ENCODE measurements at regions of chr19 and their contacts with region 1.

Region 1: DNA sequence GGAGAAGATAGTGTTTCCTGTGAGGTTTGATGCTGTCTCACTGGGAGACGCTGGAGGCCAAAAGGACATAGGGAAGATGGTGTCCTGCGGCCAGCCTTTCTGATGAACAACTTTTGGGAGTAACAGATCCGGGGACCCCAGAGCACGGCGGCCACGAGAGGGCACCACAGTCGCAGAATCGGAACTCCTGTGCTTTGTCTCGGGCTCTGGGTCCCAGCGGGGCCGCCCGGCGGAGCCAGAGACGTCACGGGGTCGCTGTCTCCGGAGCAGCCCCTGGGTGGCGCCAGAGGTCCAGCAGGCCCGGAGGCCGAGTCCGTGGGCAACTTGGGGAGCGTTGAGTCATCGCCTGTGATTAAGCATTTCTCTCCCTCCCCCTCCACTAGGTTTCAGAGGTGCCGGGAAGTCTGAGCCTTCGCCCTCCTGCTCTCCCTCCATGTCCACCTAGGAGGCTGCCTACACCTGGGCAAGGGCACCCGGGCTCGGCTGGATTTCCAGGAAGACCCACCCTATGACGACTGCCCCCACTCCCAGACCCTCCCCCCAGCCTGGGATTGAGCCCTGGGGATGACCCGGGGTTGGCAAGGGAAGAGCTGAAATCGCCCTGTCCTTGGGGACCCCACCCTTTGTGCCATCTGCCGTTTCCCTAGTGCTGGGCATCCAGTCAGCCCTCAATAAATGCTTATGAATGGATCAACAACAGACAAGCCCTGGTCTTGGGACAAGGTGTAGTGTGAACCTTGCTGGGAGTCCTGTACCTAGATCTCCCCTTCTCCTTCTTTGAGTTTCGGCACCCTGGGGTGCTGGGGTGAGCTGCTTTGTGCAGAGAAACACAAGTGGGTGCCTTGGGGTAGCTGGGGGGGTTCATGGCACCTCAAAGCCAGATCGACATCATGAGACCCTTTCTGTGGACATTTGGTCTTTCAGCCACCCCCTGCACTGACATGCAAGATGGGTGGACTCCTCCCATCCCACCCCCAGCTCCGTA is 3.4 kb downstream of the NANOS3 start:
- DNase-seq: peak; percentile 84
- ATAC-seq: peak; percentile 95
- H3K4me3 ChIP-seq: peak overlapping the region; percentile 42
- H3K27ac ChIP-seq: peak overlapping the region; percentile 70
- H3K4me1 ChIP-seq: peaks cover 25% of the 10 kb centered on the region
- H3K27me3 ChIP-seq: no peaks in the 10 kb centered on the region
- CTCF ChIP-seq: peak; percentile 100; a peak in 5 of 6 replicates
- EP300 ChIP-seq: no peak
- POLR2A ChIP-seq: 0 out of 2 replicates have a peak, but pooled peaks have one; percentile 41
- RAD21 ChIP-seq: peak; percentile 98

Region 2: GRCh38 chr19:13597640-13598039 is 282.7 kb before region 1 on chr19:
- CTCF ChIA-PET with region 1: interaction called, 6 read pairs
- POLR2A ChIA-PET with region 1: no interaction called
- RAD21 ChIA-PET with region 1: no interaction called
- SMC1A ChIA-PET with region 1: interaction called, 3 read pairs
- in situ Hi-C with region 1: no loop called
- intact Hi-C with region 1: loop called (anchors 5 kb)
- DNase-seq: peak; percentile 25
- ATAC-seq: peak; percentile 93
- H3K4me3 ChIP-seq: no peak overlapping the region
- H3K27ac ChIP-seq: no peak overlapping the region
- H3K4me1 ChIP-seq: no peaks in the 10 kb centered on the region
- H3K27me3 ChIP-seq: no peaks in the 10 kb centered on the region
- CTCF ChIP-seq: peak; percentile 57 to 85 (median 58); a peak in 5 of 6 replicates
- EP300 ChIP-seq: no peak
- POLR2A ChIP-seq: no peak
- RAD21 ChIP-seq: peak; percentile 88

Region 3: DNA sequence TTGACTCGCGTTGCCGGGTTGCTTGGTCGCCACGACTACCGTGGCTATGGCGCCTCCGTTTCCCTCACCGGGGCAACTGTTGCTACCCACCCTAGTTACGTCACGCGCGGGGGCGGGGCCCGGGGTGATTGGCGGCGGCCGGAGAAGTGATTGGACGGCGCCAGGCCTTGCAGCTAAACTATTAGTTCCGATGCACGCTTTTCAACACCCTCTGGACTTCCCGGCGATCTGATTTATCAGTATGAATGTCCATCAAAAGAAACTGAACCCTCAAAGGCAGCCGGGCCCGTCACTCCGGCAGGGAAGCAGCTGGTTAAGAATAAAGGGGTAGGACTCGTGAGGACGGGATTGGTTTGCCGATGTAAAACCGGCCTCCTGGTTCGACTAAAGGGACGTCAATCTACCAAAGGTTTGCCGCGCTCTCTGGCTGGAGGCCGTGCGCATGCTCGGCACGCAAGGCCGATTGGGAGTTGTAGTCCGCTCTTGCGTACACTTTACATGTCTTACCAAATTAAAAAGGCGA is 126.0 kb after region 1 on chr19 and contains the start of gene RFX1:
- CTCF ChIA-PET with region 1: interaction called, 5 read pairs
- POLR2A ChIA-PET with region 1: no interaction called
- RAD21 ChIA-PET with region 1: interaction called, 14 read pairs
- SMC1A ChIA-PET with region 1: interaction called, 3 read pairs
- in situ Hi-C with region 1: no loop called
- intact Hi-C with region 1: loop called (anchors 5 kb)
- DNase-seq: peak; percentile 99
- ATAC-seq: peak; percentile 86
- H3K4me3 ChIP-seq: peak within 1 kb of the TSS; percentile 79
- H3K27ac ChIP-seq: peak within 1 kb of the TSS; percentile 95
- H3K4me1 ChIP-seq: peaks cover 41% of the 10 kb centered on the region
- H3K27me3 ChIP-seq: no peaks in the 10 kb centered on the region
- CTCF ChIP-seq: no peak
- EP300 ChIP-seq: peak in 1 of 2 experiments; percentile 79; a peak in 1 of 4 replicates
- POLR2A ChIP-seq: no peak
- RAD21 ChIP-seq: no peak
- polyA plus RNA-seq, gene RFX1: 0.05 to 0.29 TPM

Region 4: GRCh38 chr19:14048443-14049153 is 168.2 kb after region 1 on chr19:
- CTCF ChIA-PET with region 1: interaction called, 81 read pairs
- POLR2A ChIA-PET with region 1: no interaction called
- RAD21 ChIA-PET with region 1: interaction called, 8 read pairs
- SMC1A ChIA-PET with region 1: interaction called, 4 read pairs
- in situ Hi-C with region 1: no loop called
- intact Hi-C with region 1: loop called (anchors 1 kb)
- DNase-seq: no peak
- ATAC-seq: peak; percentile 87
- H3K4me3 ChIP-seq: no peak overlapping the region
- H3K27ac ChIP-seq: no peak overlapping the region
- H3K4me1 ChIP-seq: no peaks in the 10 kb centered on the region
- H3K27me3 ChIP-seq: no peaks in the 10 kb centered on the region
- CTCF ChIP-seq: peak; percentile 73 to 95 (median 92)
- EP300 ChIP-seq: no peak
- POLR2A ChIP-seq: no peak
- RAD21 ChIP-seq: peak; percentile 57

Region 5: GRCh38 chr19:14081325-14082093 is 201.2 kb after region 1 on chr19:
- CTCF ChIA-PET with region 1: interaction called, 18 read pairs
- POLR2A ChIA-PET with region 1: interaction called, 3 read pairs
- RAD21 ChIA-PET with region 1: interaction called, 5 read pairs
- SMC1A ChIA-PET with region 1: interaction called, 6 read pairs
- in situ Hi-C with region 1: no loop called
- intact Hi-C with region 1: no loop called
- DNase-seq: peak; percentile 99
- ATAC-seq: peak; percentile 94
- H3K4me3 ChIP-seq: peak overlapping the region; percentile 83
- H3K27ac ChIP-seq: peak overlapping the region; percentile 86
- H3K4me1 ChIP-seq: peaks cover 4% of the 10 kb centered on the region; the same call in 1 of the 2 replicates
- H3K27me3 ChIP-seq: no peaks in the 10 kb centered on the region
- CTCF ChIP-seq: no peak
- EP300 ChIP-seq: peak in 1 of 2 experiments; percentile 9; a peak in 1 of 4 replicates
- POLR2A ChIP-seq: peak; percentile 81
- RAD21 ChIP-seq: no peak

Region 6: GRCh38 chr19:14136509-14137281 is 256.3 kb after region 1 on chr19 and contains the start of gene ASF1B:
- CTCF ChIA-PET with region 1: interaction called, 43 read pairs
- POLR2A ChIA-PET with region 1: interaction called, 4 read pairs
- RAD21 ChIA-PET with region 1: interaction called, 16 read pairs
- SMC1A ChIA-PET with region 1: interaction called, 9 read pairs
- in situ Hi-C with region 1: no loop called
- intact Hi-C with region 1: loop called (anchors 2 kb)
- DNase-seq: peak; percentile 99
- ATAC-seq: peak; percentile 93
- H3K4me3 ChIP-seq: peak within 1 kb of the TSS; percentile 98
- H3K27ac ChIP-seq: peak within 1 kb of the TSS; percentile 79
- H3K4me1 ChIP-seq: 0 out of 2 replicates have a peak, but pooled peaks cover 8% of the 10 kb centered on the region
- H3K27me3 ChIP-seq: no peaks in the 10 kb centered on the region
- CTCF ChIP-seq: peak; percentile 84 to 98 (median 95)
- EP300 ChIP-seq: no peak
- POLR2A ChIP-seq: peak; percentile 98
- RAD21 ChIP-seq: peak; percentile 91
- polyA plus RNA-seq, gene ASF1B: 10.4 to 23.1 TPM